PC-3 (cell line): ENCODE measurements at regions of chr13 and their contacts with region 1.

Region 1: DNA sequence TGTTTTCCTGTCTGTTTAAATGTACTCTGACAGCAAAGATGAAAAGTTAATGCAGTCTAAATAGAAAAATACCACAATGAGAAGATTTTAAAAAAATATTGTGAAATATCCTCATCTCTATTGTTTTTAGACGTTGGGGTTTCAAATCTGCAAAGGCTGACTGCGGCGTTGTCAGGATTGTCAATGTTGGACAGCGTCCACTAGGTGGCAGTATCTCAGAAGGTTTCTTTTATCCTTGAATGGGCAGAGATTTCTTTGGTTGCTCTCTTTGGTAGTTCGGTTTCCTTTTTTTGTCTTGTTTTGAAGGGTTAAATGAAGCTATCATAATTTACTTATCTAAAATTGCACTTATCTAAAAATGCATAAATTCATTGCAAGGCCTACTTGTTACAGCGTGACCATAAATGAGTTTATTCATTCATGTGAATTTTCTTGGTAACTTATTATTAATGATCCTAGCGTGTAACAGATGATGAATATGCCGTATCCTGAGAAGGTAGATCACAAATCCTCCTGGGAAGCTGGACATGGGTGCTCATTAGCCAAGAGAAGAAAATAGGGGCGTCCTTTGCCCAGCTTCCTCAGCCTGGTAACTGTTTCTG is 21.1 kb downstream of the TNFSF11 start:
- DNase-seq: peak; percentile 78
- ATAC-seq: peak; percentile 68
- H3K4me3 ChIP-seq: no peak overlapping the region
- H3K27ac ChIP-seq: no peak overlapping the region
- H3K4me1 ChIP-seq: peaks cover 8% of the 10 kb centered on the region
- H3K27me3 ChIP-seq: no peaks in the 10 kb centered on the region
- CTCF ChIP-seq: peak; percentile 77

Region 2: GRCh38 chr13:42174344-42175162 is 420.5 kb before region 1 on chr13:
- CTCF ChIA-PET with region 1: no interaction called
- POLR2A ChIA-PET with region 1: no interaction called
- intact Hi-C with region 1: no loop called
- DNase-seq: no peak
- ATAC-seq: no peak
- H3K4me3 ChIP-seq: no peak overlapping the region
- H3K27ac ChIP-seq: no peak overlapping the region
- H3K4me1 ChIP-seq: no peaks in the 10 kb centered on the region
- H3K27me3 ChIP-seq: no peaks in the 10 kb centered on the region
- CTCF ChIP-seq: no peak

Region 3: DNA sequence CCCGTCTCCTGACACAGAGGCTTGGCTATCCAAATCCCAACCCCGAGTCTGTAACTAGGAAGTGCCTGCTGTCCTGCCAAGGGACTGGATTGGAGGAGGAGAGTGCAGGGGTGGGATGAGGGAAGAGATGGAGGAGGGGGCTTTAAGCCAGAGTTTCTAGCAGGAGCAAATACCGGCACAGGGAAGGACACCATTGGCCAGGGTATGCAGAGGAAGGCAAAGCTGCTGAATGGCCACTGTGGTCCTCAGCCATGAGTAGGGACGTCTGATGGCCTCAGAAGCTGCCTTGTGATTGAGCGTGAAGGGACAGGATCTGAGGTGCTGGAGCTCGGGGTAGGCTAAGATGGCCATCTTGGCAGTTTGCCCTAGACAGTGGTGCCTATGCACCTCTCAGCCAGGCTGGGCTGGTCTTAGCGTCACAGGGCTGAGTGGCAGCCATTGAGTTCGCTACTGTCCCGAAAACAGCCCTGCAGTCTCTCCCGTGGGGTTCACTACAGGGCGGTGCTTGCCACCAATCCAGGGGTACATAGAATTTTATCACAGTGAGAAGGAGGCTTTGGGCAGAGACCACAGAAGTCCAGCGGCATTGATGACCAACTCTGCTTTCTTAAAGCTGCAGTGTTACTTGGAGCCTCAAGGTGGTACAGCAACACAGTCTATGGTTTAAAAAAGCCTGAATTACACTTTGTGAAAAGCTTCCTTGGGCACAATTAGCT is 261.3 kb before region 1 on chr13:
- CTCF ChIA-PET with region 1: interaction called, 4 read pairs
- POLR2A ChIA-PET with region 1: no interaction called
- intact Hi-C with region 1: loop called (anchors 1 kb)
- DNase-seq: peak; percentile 62
- ATAC-seq: peak; percentile 96
- H3K4me3 ChIP-seq: peak overlapping the region; percentile 66
- H3K27ac ChIP-seq: no peak overlapping the region
- H3K4me1 ChIP-seq: peaks cover 10% of the 10 kb centered on the region; the same call in 1 of the 2 replicates
- H3K27me3 ChIP-seq: no peaks in the 10 kb centered on the region
- CTCF ChIP-seq: peak; percentile 77

Region 4: DNA sequence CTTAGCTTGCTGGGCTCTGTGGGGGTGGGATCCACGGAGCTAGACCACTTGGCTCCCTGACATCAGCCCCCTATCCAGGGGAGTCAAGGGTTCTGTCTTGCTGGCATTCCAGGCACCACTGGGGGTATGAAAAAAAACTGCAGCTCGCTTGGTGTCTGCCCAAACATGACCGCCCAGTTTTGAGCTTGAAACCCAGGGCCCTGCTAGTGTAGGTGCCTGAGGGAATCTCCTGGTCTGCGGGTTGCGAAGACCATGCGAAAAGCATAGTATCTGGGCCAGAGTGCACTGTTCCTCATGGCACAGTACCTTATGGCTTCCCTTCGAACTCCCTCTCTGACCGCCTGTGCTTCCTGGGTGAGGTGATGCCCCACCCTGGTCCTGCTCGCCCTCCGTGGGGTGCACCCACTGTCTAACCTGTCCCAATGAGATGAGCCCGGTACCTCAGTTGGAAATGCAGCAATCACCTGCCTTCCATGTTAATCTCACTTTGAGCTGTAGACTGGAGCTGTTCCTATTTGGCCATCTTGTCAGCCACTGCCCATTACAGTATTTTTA is 141.9 kb before region 1 on chr13:
- CTCF ChIA-PET with region 1: no interaction called
- POLR2A ChIA-PET with region 1: no interaction called
- intact Hi-C with region 1: no loop called
- DNase-seq: no peak
- ATAC-seq: no peak
- H3K4me3 ChIP-seq: no peak overlapping the region
- H3K27ac ChIP-seq: no peak overlapping the region
- H3K4me1 ChIP-seq: no peaks in the 10 kb centered on the region
- H3K27me3 ChIP-seq: no peaks in the 10 kb centered on the region
- CTCF ChIP-seq: no peak

Region 5: GRCh38 chr13:42769650-42770049 is 174.6 kb after region 1 on chr13:
- CTCF ChIA-PET with region 1: no interaction called
- POLR2A ChIA-PET with region 1: no interaction called
- intact Hi-C with region 1: no loop called
- DNase-seq: peak; percentile 30
- ATAC-seq: no peak; the same call in 1 of the 2 replicates
- H3K4me3 ChIP-seq: no peak overlapping the region
- H3K27ac ChIP-seq: no peak overlapping the region
- H3K4me1 ChIP-seq: no peaks in the 10 kb centered on the region
- H3K27me3 ChIP-seq: no peaks in the 10 kb centered on the region
- CTCF ChIP-seq: peak; percentile 36

Region 6: GRCh38 chr13:42926555-42926954 is 331.5 kb after region 1 on chr13:
- CTCF ChIA-PET with region 1: no interaction called
- POLR2A ChIA-PET with region 1: interaction called, 25 read pairs
- intact Hi-C with region 1: no loop called
- DNase-seq: no peak
- ATAC-seq: no peak
- H3K4me3 ChIP-seq: no peak overlapping the region
- H3K27ac ChIP-seq: no peak overlapping the region
- H3K4me1 ChIP-seq: no peaks in the 10 kb centered on the region
- H3K27me3 ChIP-seq: no peaks in the 10 kb centered on the region
- CTCF ChIP-seq: no peak

Region 7: GRCh38 chr13:43058336-43058710 is 463.3 kb after region 1 on chr13:
- CTCF ChIA-PET with region 1: no interaction called
- POLR2A ChIA-PET with region 1: no interaction called
- intact Hi-C with region 1: no loop called
- DNase-seq: peak; percentile 92
- ATAC-seq: peak; percentile 99
- H3K4me3 ChIP-seq: no peak overlapping the region
- H3K27ac ChIP-seq: peak overlapping the region; percentile 96
- H3K4me1 ChIP-seq: peaks cover 32% of the 10 kb centered on the region
- H3K27me3 ChIP-seq: no peaks in the 10 kb centered on the region
- CTCF ChIP-seq: no peak